Activated CD4-positive, alpha-beta T cell treated with anti-CD3 and anti-CD28 coated beads, Interleukin-2, amount 10 ng/mL, durations not matched to agents 7 days and 5 days (primary cell): ENCODE measurements at regions of chr11 and their contacts with region 1.

Region 1: DNA sequence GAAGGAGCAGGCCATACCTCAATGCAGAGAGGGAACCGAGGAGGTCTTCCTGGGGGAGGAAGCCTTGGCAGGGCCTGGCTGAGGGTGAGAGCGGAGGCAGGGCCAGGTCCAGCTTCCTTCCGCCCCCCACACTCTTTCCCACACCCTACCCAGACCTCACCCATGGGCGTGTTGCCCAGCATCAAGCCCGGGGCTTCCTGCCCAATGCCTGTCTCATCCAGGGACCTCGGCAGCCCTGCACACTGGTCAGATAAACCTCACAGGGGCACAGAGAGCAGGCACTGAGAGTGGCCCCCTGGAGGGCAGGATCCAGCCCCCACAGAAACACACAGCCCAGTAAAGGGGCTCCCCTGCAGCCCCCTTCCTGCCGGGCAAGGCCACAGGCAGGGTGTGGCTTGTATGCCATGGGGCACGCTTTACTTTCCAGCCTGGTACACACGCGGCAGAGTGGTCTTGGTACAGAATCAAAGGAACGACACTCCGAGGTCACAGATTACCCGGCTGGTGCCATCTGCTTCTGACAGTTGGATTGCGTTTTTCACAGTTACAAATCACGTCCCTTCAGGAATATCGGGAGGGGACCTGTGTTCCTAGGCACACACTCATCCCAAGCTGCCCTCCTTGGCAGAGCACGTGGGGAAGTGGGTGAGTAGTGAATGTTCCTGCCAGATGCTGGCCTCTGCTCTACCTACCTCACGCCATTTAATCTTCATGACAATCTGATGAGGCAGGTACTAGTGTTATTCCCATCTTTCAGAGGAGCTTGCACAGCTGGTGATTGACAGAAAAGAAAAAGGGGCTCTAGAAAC is 20.0 kb upstream of the CD5 start:
- DNase-seq: no peak
- H3K4me3 Mint-ChIP-seq: peak overlapping the region; percentile 84
- H3K27ac Mint-ChIP-seq: peak overlapping the region; percentile 99
- H3K4me1 Mint-ChIP-seq: peaks cover 67% of the 10 kb centered on the region
- H3K27me3 Mint-ChIP-seq: no peaks in the 10 kb centered on the region

Region 2: GRCh38 chr11:60951899-60952741 is 130.1 kb before region 1 on chr11 and contains the start of gene SLC15A3:
- CTCF ChIA-PET with region 1: no interaction called
- POLR2A ChIA-PET with region 1: no interaction called
- DNase-seq: peak; percentile 50
- H3K4me3 Mint-ChIP-seq: peak within 1 kb of the TSS; percentile 74
- H3K27ac Mint-ChIP-seq: peak within 1 kb of the TSS; percentile 86
- H3K4me1 Mint-ChIP-seq: peaks cover 32% of the 10 kb centered on the region
- H3K27me3 Mint-ChIP-seq: peaks cover 16% of the 10 kb centered on the region
- total RNA-seq, gene SLC15A3: 4.0 to 4.2 TPM

Region 3: GRCh38 chr11:61065955-61066638 is 16.2 kb before region 1 on chr11:
- CTCF ChIA-PET with region 1: interaction called, 29 read pairs
- POLR2A ChIA-PET with region 1: interaction called, 7 read pairs
- DNase-seq: peak; percentile 67
- H3K4me3 Mint-ChIP-seq: peak overlapping the region; percentile 64
- H3K27ac Mint-ChIP-seq: peak overlapping the region; percentile 93
- H3K4me1 Mint-ChIP-seq: peaks cover 94% of the 10 kb centered on the region
- H3K27me3 Mint-ChIP-seq: no peaks in the 10 kb centered on the region

Region 4: DNA sequence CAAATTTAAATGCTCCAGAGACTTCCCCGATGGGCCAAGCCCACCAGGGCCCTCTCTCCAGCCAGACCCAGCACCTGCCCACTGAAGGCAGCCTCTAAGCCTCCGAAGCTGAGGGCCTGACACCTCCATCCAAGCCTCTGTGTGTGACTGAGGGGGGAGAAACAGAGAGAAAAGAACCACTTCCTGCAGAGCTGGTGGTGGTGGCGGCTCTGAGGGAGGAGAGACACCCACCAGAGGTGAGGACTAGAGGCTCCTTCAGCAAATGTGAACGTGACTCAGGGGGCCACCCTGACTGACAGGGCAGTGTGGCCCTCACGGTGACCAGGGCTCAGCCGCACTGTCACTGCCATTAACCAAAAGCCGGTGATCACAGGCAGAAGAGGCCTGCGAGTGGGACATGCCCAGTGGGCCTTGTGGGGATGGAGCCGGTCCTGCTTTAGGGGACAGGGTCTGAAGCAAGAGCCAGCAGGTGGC is 11.0 kb before region 1 on chr11:
- CTCF ChIA-PET with region 1: interaction called, 29 read pairs
- POLR2A ChIA-PET with region 1: interaction called, 7 read pairs
- DNase-seq: peak; percentile 77
- H3K4me3 Mint-ChIP-seq: peak overlapping the region; percentile 58
- H3K27ac Mint-ChIP-seq: peak overlapping the region; percentile 96
- H3K4me1 Mint-ChIP-seq: peaks cover 92% of the 10 kb centered on the region
- H3K27me3 Mint-ChIP-seq: no peaks in the 10 kb centered on the region

Region 5: GRCh38 chr11:61111786-61112517 is 29.7 kb after region 1 on chr11:
- CTCF ChIA-PET with region 1: interaction called, 18 read pairs
- POLR2A ChIA-PET with region 1: interaction called, 4 read pairs
- DNase-seq: peak; percentile 84
- H3K4me3 Mint-ChIP-seq: peak overlapping the region; percentile 73
- H3K27ac Mint-ChIP-seq: peak overlapping the region; percentile 91
- H3K4me1 Mint-ChIP-seq: peaks cover 98% of the 10 kb centered on the region
- H3K27me3 Mint-ChIP-seq: no peaks in the 10 kb centered on the region

Region 6: GRCh38 chr11:61141601-61142028 is 59.3 kb after region 1 on chr11:
- CTCF ChIA-PET with region 1: no interaction called
- POLR2A ChIA-PET with region 1: no interaction called
- DNase-seq: no peak
- H3K4me3 Mint-ChIP-seq: no peak overlapping the region
- H3K27ac Mint-ChIP-seq: no peak overlapping the region
- H3K4me1 Mint-ChIP-seq: peaks cover 13% of the 10 kb centered on the region
- H3K27me3 Mint-ChIP-seq: no peaks in the 10 kb centered on the region